AG04449 (cell line): ENCODE measurements at regions of chr6 and their contacts with region 1.

Region 1: DNA sequence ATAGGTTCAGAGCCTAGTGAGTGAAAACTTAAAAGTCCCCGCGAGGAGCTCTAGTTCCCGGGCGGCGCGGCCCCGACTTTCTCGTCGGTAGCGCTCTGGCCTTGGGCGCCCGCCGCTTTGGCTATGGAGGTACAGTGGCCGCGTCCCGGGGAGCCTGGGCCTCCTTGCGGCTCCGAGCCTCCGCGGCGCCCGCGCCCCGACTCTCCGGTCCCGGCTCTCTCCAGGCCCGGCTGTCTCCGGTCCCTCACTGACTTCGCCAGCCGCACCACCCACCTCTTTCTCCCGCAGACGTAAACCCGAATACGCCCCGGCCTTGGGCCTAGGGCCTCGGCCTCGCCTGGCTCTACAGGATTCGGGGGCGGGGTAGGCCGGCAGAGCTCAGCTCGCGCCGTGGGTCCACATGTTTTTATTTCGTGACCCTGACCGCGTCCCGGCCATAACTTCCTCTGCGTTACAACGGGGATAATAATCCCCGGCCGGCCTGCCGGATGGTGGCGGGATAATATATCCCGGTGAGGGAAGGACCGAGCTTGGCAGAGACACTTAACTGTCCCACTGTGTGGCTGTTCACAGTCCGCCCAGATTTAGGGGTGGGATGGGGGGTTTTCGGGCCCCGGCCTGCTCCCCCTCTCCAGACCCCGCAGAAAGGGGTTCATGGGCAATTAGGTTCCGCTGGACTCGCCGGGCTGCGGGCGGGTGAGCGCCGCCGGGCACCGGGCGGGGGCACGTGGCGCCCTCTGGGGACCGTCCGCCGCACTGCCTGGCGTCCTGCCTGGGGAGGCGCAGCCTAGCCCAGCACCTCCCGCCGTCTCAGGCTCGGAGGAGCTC is 10.0 kb upstream of the TBX18 start:
- DNase-seq: no peak
- H3K4me3 ChIP-seq: peak overlapping the region; percentile 56
- CTCF ChIP-seq: peak; percentile 83

Region 2: GRCh38 chr6:84422380-84422968 is 351.9 kb before region 1 on chr6:
- CTCF ChIA-PET with region 1: interaction called, 33 read pairs
- POLR2A ChIA-PET with region 1: no interaction called
- DNase-seq: no peak
- H3K4me3 ChIP-seq: no peak overlapping the region
- CTCF ChIP-seq: peak; percentile 60

Region 3: DNA sequence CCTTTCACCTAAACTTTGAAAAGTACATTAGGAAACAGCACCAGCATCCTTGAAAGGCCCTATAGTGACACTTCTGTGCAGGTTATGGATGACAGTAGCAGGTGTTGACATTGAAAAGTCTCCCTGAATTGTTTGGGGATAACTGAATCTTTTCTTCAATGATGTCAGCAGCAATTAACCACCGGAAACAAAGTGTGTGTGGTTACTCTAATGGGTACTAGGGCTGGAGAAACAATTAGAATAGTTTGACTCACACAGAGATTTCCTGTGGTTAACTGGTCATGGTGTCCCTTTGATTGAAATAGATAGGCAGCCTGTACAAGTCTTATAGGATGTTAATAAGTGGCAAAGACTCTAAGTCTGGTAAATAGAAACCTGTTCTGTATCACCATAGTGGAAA is 199.1 kb before region 1 on chr6:
- CTCF ChIA-PET with region 1: no interaction called
- POLR2A ChIA-PET with region 1: no interaction called
- DNase-seq: no peak
- H3K4me3 ChIP-seq: no peak overlapping the region
- CTCF ChIP-seq: no peak

Region 4: DNA sequence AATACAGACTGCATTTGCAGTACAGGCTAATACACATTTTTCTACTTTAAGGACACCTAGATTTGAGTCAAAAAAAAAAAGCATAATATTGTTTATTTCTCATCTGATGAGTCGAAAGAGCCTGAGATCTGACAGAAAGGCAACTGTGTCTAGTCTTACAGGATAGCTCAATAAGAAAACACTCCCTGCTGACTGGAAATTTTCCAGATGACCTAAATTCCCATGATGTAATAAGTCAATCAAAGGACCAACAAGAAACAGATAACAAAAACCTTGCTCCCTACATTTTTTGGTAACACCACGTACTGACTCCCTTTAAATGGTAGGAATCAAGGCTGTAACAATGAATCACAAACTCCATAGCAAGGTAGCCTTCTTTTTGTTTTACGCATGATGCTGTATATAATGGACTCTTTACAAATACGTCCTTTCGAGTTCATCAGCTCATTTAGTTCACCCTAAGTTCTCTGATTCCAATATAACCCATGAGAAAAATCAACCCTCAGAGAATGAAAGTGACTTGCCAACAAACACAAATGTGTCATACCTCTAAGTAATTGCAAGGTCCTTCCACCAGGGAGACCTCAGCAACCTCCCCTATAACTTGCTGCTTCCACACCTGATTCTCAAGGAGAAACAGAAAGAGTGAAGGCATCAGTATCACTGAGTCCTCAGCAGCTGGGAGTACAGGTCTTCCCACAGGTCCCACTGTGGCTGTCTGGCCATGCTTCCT is 22.1 kb before region 1 on chr6:
- CTCF ChIA-PET with region 1: interaction called, 12 read pairs
- POLR2A ChIA-PET with region 1: no interaction called
- DNase-seq: no peak
- H3K4me3 ChIP-seq: no peak overlapping the region
- CTCF ChIP-seq: no peak

Region 5: GRCh38 chr6:85065831-85066230 is 291.5 kb after region 1 on chr6:
- CTCF ChIA-PET with region 1: no interaction called
- POLR2A ChIA-PET with region 1: no interaction called
- DNase-seq: no peak
- H3K4me3 ChIP-seq: no peak overlapping the region
- CTCF ChIP-seq: no peak

Region 6: GRCh38 chr6:85323435-85324040 is 549.2 kb after region 1 on chr6:
- CTCF ChIA-PET with region 1: interaction called, 15 read pairs
- POLR2A ChIA-PET with region 1: no interaction called
- DNase-seq: peak; percentile 54
- H3K4me3 ChIP-seq: no peak overlapping the region
- CTCF ChIP-seq: peak; percentile 83